ENCODE measurements at regions of chr17 and their contacts with region 1.

Region 1: GRCh38 chr17:10618202-10618635 is 38.9 kb downstream of the MYH3 start:
- DNase-seq: peak; percentile 73
- H3K4me3 Mint-ChIP-seq: no peak overlapping the region
- H3K27ac Mint-ChIP-seq: no peak overlapping the region
- H3K4me1 Mint-ChIP-seq: no peaks in the 10 kb centered on the region
- H3K27me3 Mint-ChIP-seq: peaks cover 4% of the 10 kb centered on the region

Region 2: GRCh38 chr17:9729034-9729650 is 889.1 kb before region 1 on chr17:
- CTCF ChIA-PET with region 1: no interaction called
- intact Hi-C with region 1: loop called (anchors 10 kb)
- DNase-seq: peak; percentile 21
- H3K4me3 Mint-ChIP-seq: no peak overlapping the region
- H3K27ac Mint-ChIP-seq: no peak overlapping the region
- H3K4me1 Mint-ChIP-seq: no peaks in the 10 kb centered on the region
- H3K27me3 Mint-ChIP-seq: peaks cover 6% of the 10 kb centered on the region

Region 3: GRCh38 chr17:10295728-10296343 is 322.4 kb before region 1 on chr17:
- CTCF ChIA-PET with region 1: interaction called, 4 read pairs
- intact Hi-C with region 1: loop called (anchors 1 kb)
- DNase-seq: peak; percentile 58
- H3K4me3 Mint-ChIP-seq: no peak overlapping the region
- H3K27ac Mint-ChIP-seq: no peak overlapping the region
- H3K4me1 Mint-ChIP-seq: no peaks in the 10 kb centered on the region
- H3K27me3 Mint-ChIP-seq: peaks cover 8% of the 10 kb centered on the region

Region 4: GRCh38 chr17:10600571-10600970 is 17.6 kb before region 1 on chr17:
- CTCF ChIA-PET with region 1: interaction called, 37 read pairs
- intact Hi-C with region 1: no loop called
- DNase-seq: no peak
- H3K4me3 Mint-ChIP-seq: no peak overlapping the region
- H3K27ac Mint-ChIP-seq: no peak overlapping the region
- H3K4me1 Mint-ChIP-seq: no peaks in the 10 kb centered on the region
- H3K27me3 Mint-ChIP-seq: peaks cover 8% of the 10 kb centered on the region

Region 5: GRCh38 chr17:10646392-10646990 is 28.3 kb after region 1 on chr17:
- CTCF ChIA-PET with region 1: interaction called, 23 read pairs
- intact Hi-C with region 1: no loop called
- DNase-seq: peak; percentile 85
- H3K4me3 Mint-ChIP-seq: no peak overlapping the region
- H3K27ac Mint-ChIP-seq: no peak overlapping the region
- H3K4me1 Mint-ChIP-seq: no peaks in the 10 kb centered on the region
- H3K27me3 Mint-ChIP-seq: no peaks in the 10 kb centered on the region

Region 6: GRCh38 chr17:10821064-10821463 is 202.8 kb after region 1 on chr17:
- CTCF ChIA-PET with region 1: no interaction called
- intact Hi-C with region 1: no loop called
- DNase-seq: no peak
- H3K4me3 Mint-ChIP-seq: no peak overlapping the region
- H3K27ac Mint-ChIP-seq: no peak overlapping the region
- H3K4me1 Mint-ChIP-seq: no peaks in the 10 kb centered on the region
- H3K27me3 Mint-ChIP-seq: no peaks in the 10 kb centered on the region